CD8-positive, alpha-beta T cell (primary cell): ENCODE measurements at regions of chr1 and their contacts with region 1.

Region 1: DNA sequence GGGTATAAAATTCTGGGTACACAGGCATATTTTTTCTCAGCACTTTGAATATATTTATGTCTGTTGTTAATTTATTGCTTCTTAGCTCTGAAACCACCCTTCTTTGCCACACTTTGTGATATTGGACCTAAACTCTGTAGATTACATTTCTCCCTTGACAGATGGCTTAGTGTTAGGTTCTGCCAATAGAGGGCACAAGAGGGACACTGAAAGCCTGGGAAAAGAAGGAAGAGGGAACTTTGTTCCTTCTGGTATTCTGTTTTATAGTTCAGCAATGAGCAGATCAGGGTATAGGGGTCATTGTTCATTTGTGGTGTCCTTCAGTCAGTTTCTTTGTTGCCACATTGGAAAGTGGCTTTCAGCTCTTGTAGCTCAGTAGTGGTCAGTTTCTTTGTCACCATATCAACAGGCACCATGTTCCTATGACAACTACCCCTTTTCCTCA is 423.5 kb upstream of the PROX1 start:
- DNase-seq: no peak
- ATAC-seq: no peak
- H3K4me3 ChIP-seq: no peak overlapping the region
- H3K4me3 Mint-ChIP-seq: no peak overlapping the region
- H3K27ac ChIP-seq: no peak overlapping the region
- H3K27ac Mint-ChIP-seq: no peak overlapping the region
- H3K4me1 ChIP-seq: no peaks in the 10 kb centered on the region
- H3K4me1 Mint-ChIP-seq: no peaks in the 10 kb centered on the region
- H3K27me3 ChIP-seq: no peaks in the 10 kb centered on the region
- H3K27me3 Mint-ChIP-seq: peaks cover 6% of the 10 kb centered on the region
- CTCF ChIP-seq: no peak

Region 2: DNA sequence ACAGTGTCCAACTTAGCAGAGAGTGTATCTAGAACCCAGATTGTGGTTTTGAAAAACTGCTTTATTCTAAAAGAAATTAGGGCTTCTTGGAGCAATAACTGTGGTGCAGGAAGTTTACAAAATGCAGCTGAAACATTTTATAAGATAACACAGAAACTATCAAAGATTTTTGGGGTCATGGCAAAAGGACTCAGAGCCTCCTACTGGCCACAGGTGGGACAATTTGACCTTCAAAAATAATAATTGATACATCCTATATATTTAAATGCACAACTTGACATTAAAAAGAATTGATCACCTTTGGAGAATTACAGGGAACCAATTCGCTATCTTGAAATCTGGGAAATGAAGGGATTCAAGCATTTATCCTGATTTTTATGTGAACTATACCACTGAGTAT is 278.0 kb before region 1 on chr1:
- CTCF ChIA-PET with region 1: no interaction called
- POLR2A ChIA-PET with region 1: no interaction called
- intact Hi-C with region 1: no loop called
- DNase-seq: no peak
- ATAC-seq: no peak
- H3K4me3 ChIP-seq: no peak overlapping the region
- H3K4me3 Mint-ChIP-seq: no peak overlapping the region
- H3K27ac ChIP-seq: no peak overlapping the region
- H3K27ac Mint-ChIP-seq: no peak overlapping the region
- H3K4me1 ChIP-seq: no peaks in the 10 kb centered on the region
- H3K4me1 Mint-ChIP-seq: no peaks in the 10 kb centered on the region
- H3K27me3 ChIP-seq: no peaks in the 10 kb centered on the region
- H3K27me3 Mint-ChIP-seq: no peaks in the 10 kb centered on the region
- CTCF ChIP-seq: no peak

Region 3: GRCh38 chr1:213541641-213542040 is 22.6 kb before region 1 on chr1:
- CTCF ChIA-PET with region 1: no interaction called
- POLR2A ChIA-PET with region 1: no interaction called
- intact Hi-C with region 1: loop called in 1 of 2 experiments (anchors 1 kb)
- DNase-seq: no peak
- ATAC-seq: no peak
- H3K4me3 ChIP-seq: no peak overlapping the region
- H3K4me3 Mint-ChIP-seq: no peak overlapping the region
- H3K27ac ChIP-seq: no peak overlapping the region
- H3K27ac Mint-ChIP-seq: no peak overlapping the region
- H3K4me1 ChIP-seq: no peaks in the 10 kb centered on the region
- H3K4me1 Mint-ChIP-seq: no peaks in the 10 kb centered on the region
- H3K27me3 ChIP-seq: peaks cover 0 to 4% of the 10 kb centered on the region in 2 experiments
- H3K27me3 Mint-ChIP-seq: peaks cover 3% of the 10 kb centered on the region
- CTCF ChIP-seq: no peak

Region 4: DNA sequence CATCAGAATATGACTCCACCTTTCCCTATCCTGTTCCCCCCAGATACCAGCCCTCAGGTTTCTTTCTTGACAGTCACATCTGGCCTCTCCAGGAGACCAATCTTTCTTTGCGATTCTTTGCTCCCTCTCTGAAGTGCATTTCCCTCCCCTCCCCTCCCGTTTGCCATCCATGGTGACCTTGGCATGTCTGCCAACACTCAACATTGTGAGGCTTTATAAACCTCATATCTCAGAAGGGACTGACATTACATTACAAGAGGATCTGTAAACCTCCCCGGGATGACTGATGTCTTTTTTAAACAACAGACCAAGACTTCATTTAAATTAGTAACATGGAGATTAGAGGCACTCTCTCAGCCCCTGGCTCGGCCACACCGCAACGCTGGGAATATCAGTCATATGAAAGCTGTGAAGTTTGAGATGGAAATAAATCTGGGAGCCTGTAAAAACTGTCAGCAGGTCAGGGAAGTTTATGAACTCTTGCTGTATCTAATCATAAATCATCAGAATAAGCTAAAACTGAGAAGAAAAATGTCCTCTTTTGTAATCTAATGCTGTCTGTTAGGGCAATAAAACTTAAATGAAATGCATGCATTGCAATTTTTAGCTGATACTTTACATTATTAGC is 21.8 kb after region 1 on chr1:
- CTCF ChIA-PET with region 1: no interaction called
- POLR2A ChIA-PET with region 1: no interaction called
- intact Hi-C with region 1: no loop called
- DNase-seq: no peak
- ATAC-seq: no peak
- H3K4me3 ChIP-seq: no peak overlapping the region
- H3K4me3 Mint-ChIP-seq: no peak overlapping the region
- H3K27ac ChIP-seq: no peak overlapping the region
- H3K27ac Mint-ChIP-seq: no peak overlapping the region
- H3K4me1 ChIP-seq: no peaks in the 10 kb centered on the region
- H3K4me1 Mint-ChIP-seq: no peaks in the 10 kb centered on the region
- H3K27me3 ChIP-seq: no peaks in the 10 kb centered on the region
- H3K27me3 Mint-ChIP-seq: peaks cover 2% of the 10 kb centered on the region
- CTCF ChIP-seq: no peak